Calu3 (cell line): ENCODE measurements at regions of chr18 and their contacts with region 1.

Region 1: DNA sequence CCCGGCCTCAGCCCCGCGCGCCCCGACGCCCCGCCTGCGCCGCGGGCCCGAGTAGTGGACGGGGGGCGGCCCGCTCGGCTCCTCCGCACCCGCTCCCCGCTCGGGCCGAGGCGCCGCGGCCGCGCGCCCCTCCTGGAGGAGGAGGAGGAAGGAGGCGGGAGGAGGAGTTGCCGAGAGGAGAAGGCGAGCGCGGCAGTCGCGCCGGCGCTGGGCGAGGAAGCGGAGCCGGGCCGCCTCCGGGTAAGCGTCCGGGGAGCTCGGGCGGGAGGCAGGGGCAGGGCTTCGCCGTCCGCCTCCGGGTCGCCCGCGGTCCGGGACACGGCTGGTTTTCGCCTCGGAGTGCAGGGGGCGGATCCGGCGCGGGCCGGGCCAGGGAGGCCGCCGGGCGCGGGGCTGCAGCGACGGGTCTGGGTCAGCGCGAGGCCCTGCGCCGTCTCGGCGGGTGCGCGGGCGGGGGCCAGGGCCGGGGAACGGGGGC is at the start of gene SOCS6:
- DNase-seq: peak; percentile 71
- H3K4me3 Mint-ChIP-seq: peak within 1 kb of the TSS; percentile 77
- H3K27ac Mint-ChIP-seq: peak within 1 kb of the TSS; percentile 89
- H3K4me1 Mint-ChIP-seq: peaks cover 58% of the 10 kb centered on the region
- H3K27me3 Mint-ChIP-seq: no peaks in the 10 kb centered on the region
- CTCF ChIP-seq: no peak
- total RNA-seq, gene SOCS6: 26.1 and 33.0 TPM in 2 replicates

Region 2: GRCh38 chr18:70205421-70206397 is 83.2 kb before region 1 on chr18 and contains the start of gene RTTN:
- CTCF ChIA-PET with region 1: no interaction called
- intact Hi-C with region 1: loop called (anchors 2 kb)
- DNase-seq: peak; percentile 96
- H3K4me3 Mint-ChIP-seq: peak within 1 kb of the TSS; percentile 96
- H3K27ac Mint-ChIP-seq: peak within 1 kb of the TSS; percentile 95
- H3K4me1 Mint-ChIP-seq: peaks cover 18% of the 10 kb centered on the region
- H3K27me3 Mint-ChIP-seq: no peaks in the 10 kb centered on the region
- CTCF ChIP-seq: no peak
- total RNA-seq, gene RTTN: 20.4 and 22.7 TPM in 2 replicates

Region 3: GRCh38 chr18:70243131-70243530 is 45.8 kb before region 1 on chr18:
- CTCF ChIA-PET with region 1: no interaction called
- intact Hi-C with region 1: loop called (anchors 5 kb)
- DNase-seq: peak; percentile 69
- H3K4me3 Mint-ChIP-seq: peak overlapping the region; percentile 60
- H3K27ac Mint-ChIP-seq: peak overlapping the region; percentile 90
- H3K4me1 Mint-ChIP-seq: peaks cover 11% of the 10 kb centered on the region
- H3K27me3 Mint-ChIP-seq: no peaks in the 10 kb centered on the region
- CTCF ChIP-seq: no peak

Region 4: DNA sequence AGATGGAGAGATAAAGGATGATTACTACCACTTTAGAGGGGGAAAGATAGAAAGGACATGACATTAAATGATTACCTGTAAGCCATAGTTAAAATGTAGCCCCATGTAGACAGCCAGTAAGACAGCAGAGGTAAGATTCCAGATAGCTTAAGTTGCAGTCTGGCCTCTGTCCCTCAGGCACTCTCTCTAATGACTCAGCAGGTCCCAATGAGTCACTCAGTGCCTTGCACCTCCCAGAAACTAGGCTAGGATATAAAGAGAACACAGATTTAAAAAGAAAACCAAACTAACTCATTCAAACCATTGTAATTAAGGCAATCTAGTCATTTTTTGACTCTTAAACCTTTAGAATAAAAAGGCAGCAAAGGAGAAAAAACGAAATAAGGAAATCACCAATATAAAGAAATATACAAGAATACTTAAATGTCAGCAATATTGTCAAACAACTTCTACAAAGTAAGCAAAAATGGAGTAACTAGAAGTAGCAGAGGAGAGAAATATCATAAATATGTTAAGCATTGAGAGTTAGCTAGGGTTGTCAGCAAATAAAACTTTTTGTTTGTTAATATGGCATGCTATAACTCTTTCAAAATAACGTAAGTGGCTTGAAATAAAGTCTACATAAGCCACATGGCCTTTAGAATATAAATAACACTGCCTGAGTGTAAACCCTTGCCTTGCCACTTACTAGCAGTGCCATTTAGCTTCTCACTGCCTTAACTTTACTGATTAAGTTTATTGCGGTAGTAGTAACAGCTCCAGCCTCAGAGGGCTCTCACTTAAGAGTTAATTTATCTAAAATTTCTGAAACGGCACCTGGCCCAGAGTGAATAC is 48.5 kb after region 1 on chr18:
- CTCF ChIA-PET with region 1: no interaction called
- intact Hi-C with region 1: loop called (anchors 5 kb)
- DNase-seq: peak; percentile 63
- H3K4me3 Mint-ChIP-seq: peak overlapping the region; percentile 8
- H3K27ac Mint-ChIP-seq: peak overlapping the region; percentile 90
- H3K4me1 Mint-ChIP-seq: peaks cover 25% of the 10 kb centered on the region
- H3K27me3 Mint-ChIP-seq: no peaks in the 10 kb centered on the region
- CTCF ChIP-seq: no peak

Region 5: DNA sequence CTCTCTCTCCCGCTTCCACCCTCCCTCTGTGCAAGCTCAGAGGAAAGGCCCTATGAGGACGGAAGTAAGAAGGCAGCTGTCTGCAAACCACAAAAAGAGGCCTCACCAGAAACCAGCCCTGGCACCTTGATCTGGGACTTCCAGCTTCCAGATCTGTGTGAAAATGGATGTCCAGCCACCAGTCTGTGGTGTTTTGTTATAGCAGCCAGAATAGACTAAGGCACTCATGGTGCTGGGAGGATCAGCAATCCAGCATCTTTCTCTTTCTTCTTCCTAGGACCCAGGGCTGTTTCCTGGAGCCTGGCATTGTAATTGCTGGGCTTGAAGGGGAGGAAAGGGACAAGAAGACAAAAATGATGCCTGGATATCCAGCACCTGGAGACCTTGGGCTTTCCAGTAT is 122.4 kb after region 1 on chr18:
- CTCF ChIA-PET with region 1: no interaction called
- intact Hi-C with region 1: no loop called
- DNase-seq: no peak
- H3K4me3 Mint-ChIP-seq: no peak overlapping the region
- H3K27ac Mint-ChIP-seq: no peak overlapping the region
- H3K4me1 Mint-ChIP-seq: peaks cover 17% of the 10 kb centered on the region
- H3K27me3 Mint-ChIP-seq: no peaks in the 10 kb centered on the region
- CTCF ChIP-seq: no peak

Region 6: GRCh38 chr18:70421471-70422390 is 132.8 kb after region 1 on chr18:
- CTCF ChIA-PET with region 1: no interaction called
- intact Hi-C with region 1: loop called (anchors 5 kb)
- DNase-seq: peak; percentile 86
- H3K4me3 Mint-ChIP-seq: peak overlapping the region; percentile 46
- H3K27ac Mint-ChIP-seq: peak overlapping the region; percentile 93
- H3K4me1 Mint-ChIP-seq: peaks cover 75% of the 10 kb centered on the region
- H3K27me3 Mint-ChIP-seq: no peaks in the 10 kb centered on the region
- CTCF ChIP-seq: no peak

Region 7: DNA sequence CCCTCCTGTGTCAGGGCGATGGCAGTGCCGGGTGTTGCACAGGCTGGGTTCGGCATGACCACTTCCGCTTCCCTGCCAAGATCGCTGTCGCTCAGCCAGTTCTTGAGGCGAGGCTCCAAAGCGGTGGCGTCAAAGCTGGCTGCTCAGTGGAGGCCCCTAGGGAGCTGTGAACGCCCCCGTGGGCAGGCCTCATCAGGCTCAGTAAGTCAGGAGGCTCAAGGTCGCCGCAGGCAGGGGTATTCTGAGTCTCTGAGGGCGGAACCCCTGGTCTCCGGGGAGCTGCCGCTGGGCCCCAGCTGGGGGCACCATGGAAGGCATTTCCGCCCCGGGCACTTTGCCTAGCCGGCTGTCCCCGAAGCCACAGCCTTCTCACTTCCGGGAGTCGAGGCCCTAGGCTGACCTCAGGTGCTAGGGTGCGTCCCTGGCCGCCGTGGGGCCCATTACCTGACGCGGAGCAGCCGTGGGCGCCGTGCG is 210.4 kb after region 1 on chr18:
- CTCF ChIA-PET with region 1: no interaction called
- intact Hi-C with region 1: no loop called
- DNase-seq: no peak
- H3K4me3 Mint-ChIP-seq: no peak overlapping the region
- H3K27ac Mint-ChIP-seq: no peak overlapping the region
- H3K4me1 Mint-ChIP-seq: peaks cover 16% of the 10 kb centered on the region
- H3K27me3 Mint-ChIP-seq: no peaks in the 10 kb centered on the region
- CTCF ChIP-seq: no peak